ENCODE measurements at regions of chr2 and their contacts with region 1.

Region 1: DNA sequence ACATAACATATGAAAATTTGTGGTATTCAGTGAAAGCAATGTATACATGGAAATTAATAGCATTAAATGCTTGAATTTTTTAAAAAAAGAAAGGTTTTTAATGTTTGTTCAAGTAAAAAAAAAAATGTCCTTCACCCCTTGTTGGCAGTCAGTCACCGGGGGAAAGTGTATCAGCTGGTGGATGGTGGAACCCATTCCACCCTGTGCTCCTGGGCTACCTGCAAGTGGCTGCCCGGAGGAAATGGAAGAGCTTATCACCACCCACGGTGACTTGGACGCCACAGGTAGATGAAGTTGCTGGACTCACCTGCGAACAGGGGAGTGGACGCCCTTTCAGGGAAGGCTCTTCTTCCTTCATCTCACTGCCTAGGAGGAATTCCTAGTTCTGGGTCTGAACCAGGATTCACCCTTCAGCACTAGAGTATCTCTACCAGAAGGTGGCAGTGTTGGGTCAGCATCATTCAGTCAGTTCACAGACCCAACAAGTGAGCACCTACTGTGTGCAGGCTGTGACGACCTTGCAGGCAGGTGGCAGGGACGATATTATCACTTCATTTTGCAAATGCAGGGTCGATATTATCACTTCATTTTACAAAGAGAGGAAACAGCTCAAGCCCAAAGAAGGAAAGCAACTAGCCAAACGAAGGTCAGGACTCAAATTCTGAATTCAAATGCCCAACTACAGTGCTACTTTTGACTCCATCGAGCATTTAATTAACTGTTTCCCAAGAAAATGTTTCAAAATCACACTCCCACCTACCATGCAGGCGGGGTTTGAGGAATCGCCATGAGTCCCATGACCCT is 35.8 kb downstream of the CIB4 start:
- DNase-seq: peak in 6 of 9 donors; percentile 24 to 52 (median 43)
- ATAC-seq: peak; percentile 60
- H3K4me3 ChIP-seq: no peak overlapping the region
- H3K4me3 Mint-ChIP-seq: no peak overlapping the region
- H3K27ac ChIP-seq: no peak overlapping the region
- H3K27ac Mint-ChIP-seq: peak overlapping the region in 1 of 9 donors; percentile 38
- H3K4me1 ChIP-seq: peaks cover 0 to 18% of the 10 kb centered on the region in 2 donors
- H3K4me1 Mint-ChIP-seq: peaks cover 11 to 28% (median 23%) of the 10 kb centered on the region in 7 donors
- H3K27me3 ChIP-seq: no peaks in the 10 kb centered on the region
- H3K27me3 Mint-ChIP-seq: peaks cover 18 to 45% (median 30%) of the 10 kb centered on the region in 5 donors

Region 2: DNA sequence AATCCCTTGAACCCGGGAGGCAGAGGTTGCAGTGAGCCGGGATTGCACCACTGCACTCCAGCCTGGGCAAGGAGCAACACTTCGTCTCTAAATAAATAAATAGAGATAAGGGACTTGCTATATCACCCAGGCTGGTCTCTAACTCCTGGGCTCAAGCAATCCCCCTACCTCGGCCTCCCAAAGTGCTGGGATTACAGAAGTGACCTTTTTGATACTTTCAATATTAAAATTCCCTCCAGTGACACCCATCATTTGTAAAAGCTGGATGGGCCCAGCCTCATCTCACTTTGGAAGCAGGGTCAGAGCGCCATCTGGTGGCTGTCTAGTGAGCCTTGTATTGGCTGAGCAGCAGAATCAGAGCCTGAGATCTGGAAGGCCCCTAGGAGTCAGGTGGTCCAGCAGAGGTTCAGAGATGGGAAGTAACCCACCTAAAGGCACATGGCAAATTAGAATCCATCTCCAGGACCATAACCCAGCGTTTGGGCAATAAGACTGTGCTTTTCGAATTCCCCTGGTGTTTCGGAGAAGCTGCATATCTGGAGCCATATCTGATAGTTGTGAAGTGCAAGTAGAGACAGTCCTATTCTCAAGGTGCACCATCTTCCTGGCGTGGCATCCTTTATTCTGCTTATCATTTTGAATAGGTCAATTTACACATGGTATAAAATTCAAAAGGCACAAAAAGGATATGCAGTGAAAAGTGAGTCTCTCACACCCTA is 140.4 kb after region 1 on chr2:
- CTCF ChIA-PET with region 1: interaction called, 61 read pairs
- POLR2A ChIA-PET with region 1: no interaction called
- intact Hi-C with region 1: loop called in 1 of 2 experiments (anchors 1 kb)
- DNase-seq: peak; percentile 42 to 75 (median 64)
- ATAC-seq: peak; percentile 84
- H3K4me3 ChIP-seq: no peak overlapping the region
- H3K4me3 Mint-ChIP-seq: no peak overlapping the region
- H3K27ac ChIP-seq: no peak overlapping the region
- H3K27ac Mint-ChIP-seq: no peak overlapping the region
- H3K4me1 ChIP-seq: no peaks in the 10 kb centered on the region
- H3K4me1 Mint-ChIP-seq: peaks cover 0 to 9% (median 4%) of the 10 kb centered on the region in 7 donors
- H3K27me3 ChIP-seq: no peaks in the 10 kb centered on the region
- H3K27me3 Mint-ChIP-seq: peaks cover 0 to under 1% (median 0%) of the 10 kb centered on the region in 5 donors

Region 3: DNA sequence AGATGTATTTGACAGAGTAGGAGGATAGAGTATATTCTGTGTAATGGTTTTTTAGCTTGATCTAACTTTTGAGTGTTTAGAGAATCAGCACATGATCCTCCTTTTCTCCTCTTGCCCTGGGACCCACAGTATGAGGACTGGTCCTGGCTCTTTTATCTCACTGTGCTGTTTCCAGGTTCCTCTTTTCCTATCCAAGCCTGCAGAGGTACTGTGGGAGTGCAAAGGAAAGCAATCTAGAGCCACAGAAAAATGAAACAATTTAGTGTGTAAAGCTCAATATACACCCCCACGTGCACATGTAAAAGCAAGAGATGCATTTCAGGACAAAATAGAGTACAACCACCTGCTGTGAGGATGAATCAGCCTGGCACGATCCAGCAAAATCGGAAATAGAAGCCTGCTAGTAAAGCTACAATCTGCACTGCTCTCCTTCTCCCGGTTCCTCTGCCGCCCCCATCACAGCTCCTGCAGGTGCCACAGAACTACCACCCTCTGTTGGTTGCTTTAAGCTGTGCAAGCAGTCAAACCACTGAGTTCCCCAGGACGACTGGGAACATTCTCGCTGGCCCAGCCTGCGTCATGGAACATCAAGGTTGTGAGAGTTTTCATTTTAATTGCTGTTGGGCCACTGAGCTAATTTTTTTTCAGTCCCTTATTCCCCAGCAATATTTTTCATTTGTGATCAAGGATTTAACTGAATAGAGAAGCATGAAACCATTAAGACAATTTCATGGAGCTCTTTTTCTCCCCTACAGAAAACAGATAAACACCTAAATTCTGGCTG is 317.2 kb after region 1 on chr2:
- CTCF ChIA-PET with region 1: no interaction called
- POLR2A ChIA-PET with region 1: no interaction called
- intact Hi-C with region 1: loop called in 1 of 2 experiments (anchors 10 kb)
- DNase-seq: peak in 7 of 9 donors; percentile 4 to 48 (median 39)
- ATAC-seq: peak; percentile 85
- H3K4me3 ChIP-seq: no peak overlapping the region
- H3K4me3 Mint-ChIP-seq: peak overlapping the region in 1 of 10 donors; percentile 24
- H3K27ac ChIP-seq: no peak overlapping the region
- H3K27ac Mint-ChIP-seq: peak overlapping the region in 1 of 9 donors; percentile 15
- H3K4me1 ChIP-seq: no peaks in the 10 kb centered on the region
- H3K4me1 Mint-ChIP-seq: peaks cover 0 to 9% (median 3%) of the 10 kb centered on the region in 7 donors
- H3K27me3 ChIP-seq: no peaks in the 10 kb centered on the region
- H3K27me3 Mint-ChIP-seq: peaks cover 0 to 27% (median 20%) of the 10 kb centered on the region in 5 donors

Measured in naive thymus-derived CD4-positive, alpha-beta T cell (primary cell).